ENCODE measurements at regions of chr6 and their contacts with region 1.

Region 1: GRCh38 chr6:96836631-96837080 is 621 bp downstream of the GPR63 start:
- DNase-seq: no peak
- ATAC-seq: peak; percentile 21
- H3K4me3 ChIP-seq: peak overlapping the region; percentile 83
- H3K27ac ChIP-seq: no peak overlapping the region
- H3K4me1 ChIP-seq: no peaks in the 10 kb centered on the region; the same call in 1 of the 2 replicates
- H3K27me3 ChIP-seq: peaks cover 21% of the 10 kb centered on the region
- CTCF ChIP-seq: no peak

Region 2: GRCh38 chr6:96889146-96889545 is 52.5 kb after region 1 on chr6:
- CTCF ChIA-PET with region 1: no interaction called
- POLR2A ChIA-PET with region 1: no interaction called
- intact Hi-C with region 1: no loop called
- DNase-seq: no peak
- ATAC-seq: no peak
- H3K4me3 ChIP-seq: no peak overlapping the region
- H3K27ac ChIP-seq: no peak overlapping the region
- H3K4me1 ChIP-seq: no peaks in the 10 kb centered on the region
- H3K27me3 ChIP-seq: no peaks in the 10 kb centered on the region
- CTCF ChIP-seq: no peak

Region 3: GRCh38 chr6:96925290-96925687 is 88.6 kb after region 1 on chr6:
- CTCF ChIA-PET with region 1: no interaction called
- POLR2A ChIA-PET with region 1: interaction called, 10 read pairs
- intact Hi-C with region 1: no loop called
- DNase-seq: no peak
- ATAC-seq: no peak
- H3K4me3 ChIP-seq: peak overlapping the region; percentile 68; the same call in 1 of the 2 replicates
- H3K27ac ChIP-seq: no peak overlapping the region
- H3K4me1 ChIP-seq: no peaks in the 10 kb centered on the region; the same call in 1 of the 2 replicates
- H3K27me3 ChIP-seq: peaks cover 83% of the 10 kb centered on the region
- CTCF ChIP-seq: no peak

Region 4: GRCh38 chr6:97009781-97010492 is 173.3 kb after region 1 on chr6:
- CTCF ChIA-PET with region 1: no interaction called
- POLR2A ChIA-PET with region 1: no interaction called
- intact Hi-C with region 1: no loop called
- DNase-seq: no peak
- ATAC-seq: no peak
- H3K4me3 ChIP-seq: no peak overlapping the region
- H3K27ac ChIP-seq: no peak overlapping the region
- H3K4me1 ChIP-seq: no peaks in the 10 kb centered on the region
- H3K27me3 ChIP-seq: peaks cover 5% of the 10 kb centered on the region; the same call in 1 of the 2 replicates
- CTCF ChIP-seq: no peak